ENCODE measurements at regions of chr6 and their contacts with region 1.

Region 1: DNA sequence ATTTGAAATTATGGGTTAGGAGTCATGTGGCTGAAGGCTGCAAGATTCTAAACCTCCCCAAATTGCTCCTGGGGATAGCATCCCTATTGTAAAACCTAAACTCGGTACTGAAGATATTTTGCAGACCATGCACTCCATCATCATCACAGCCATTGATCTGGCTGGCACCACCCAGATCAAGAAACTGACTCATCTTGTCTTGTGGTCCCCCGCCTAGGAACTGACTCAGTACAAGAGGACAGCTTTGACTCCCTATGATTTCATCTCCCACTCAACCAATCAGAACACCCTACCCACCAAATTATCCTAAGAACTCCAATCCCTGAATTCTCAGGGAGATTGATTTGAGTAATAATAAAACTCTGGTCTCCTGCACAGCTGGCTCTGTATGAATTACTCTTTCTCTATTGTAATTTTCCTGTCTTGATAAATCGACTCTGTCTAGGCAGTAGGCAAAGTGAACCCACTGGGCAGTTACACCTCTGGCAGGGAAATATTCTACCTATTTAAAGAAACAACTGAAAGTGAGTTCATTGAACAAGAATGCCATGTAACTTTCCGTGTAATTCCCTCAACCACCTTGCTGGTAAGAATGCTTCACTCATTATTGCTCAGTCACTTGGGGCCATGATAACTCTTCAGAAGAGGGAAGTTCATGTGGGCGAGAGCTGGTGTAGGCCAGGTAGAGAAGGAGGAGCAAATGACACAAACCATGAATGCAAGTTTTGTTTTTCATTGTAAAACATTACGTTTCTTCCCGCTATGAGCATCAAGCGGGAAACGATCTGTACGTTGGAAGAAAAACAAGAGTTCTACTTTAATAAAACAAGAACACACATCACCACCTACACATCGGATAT is 602.9 kb upstream of the ARID1B start:
- DNase-seq: no peak
- H3K4me3 Mint-ChIP-seq: no peak overlapping the region
- H3K27ac Mint-ChIP-seq: peak overlapping the region; percentile 1
- H3K4me1 Mint-ChIP-seq: peaks cover 15% of the 10 kb centered on the region
- H3K27me3 Mint-ChIP-seq: peaks cover 4% of the 10 kb centered on the region

Region 2: GRCh38 chr6:156060013-156060412 is 114.2 kb before region 1 on chr6:
- intact Hi-C with region 1: no loop called
- DNase-seq: no peak
- H3K4me3 Mint-ChIP-seq: no peak overlapping the region
- H3K27ac Mint-ChIP-seq: no peak overlapping the region
- H3K4me1 Mint-ChIP-seq: no peaks in the 10 kb centered on the region
- H3K27me3 Mint-ChIP-seq: no peaks in the 10 kb centered on the region

Region 3: GRCh38 chr6:156256161-156256560 is 81.9 kb after region 1 on chr6:
- intact Hi-C with region 1: loop called (anchors 1 kb)
- DNase-seq: no peak
- H3K4me3 Mint-ChIP-seq: no peak overlapping the region
- H3K27ac Mint-ChIP-seq: no peak overlapping the region
- H3K4me1 Mint-ChIP-seq: peaks cover 8% of the 10 kb centered on the region
- H3K27me3 Mint-ChIP-seq: no peaks in the 10 kb centered on the region

Measured in activated T-helper 2 cell treated with anti-CD3 and anti-CD28 coated beads, Interferon-gamma antibody, Interleukin-2, Interleukin-4, amounts not matched to agents 10 μg/mL and 5 μg/mL and 100 μg/mL, durations not matched to agents 14 hours and 24 hours and 36 hours (primary cell).